ENCODE measurements at regions of chr18 and their contacts with region 1.

Region 1: DNA sequence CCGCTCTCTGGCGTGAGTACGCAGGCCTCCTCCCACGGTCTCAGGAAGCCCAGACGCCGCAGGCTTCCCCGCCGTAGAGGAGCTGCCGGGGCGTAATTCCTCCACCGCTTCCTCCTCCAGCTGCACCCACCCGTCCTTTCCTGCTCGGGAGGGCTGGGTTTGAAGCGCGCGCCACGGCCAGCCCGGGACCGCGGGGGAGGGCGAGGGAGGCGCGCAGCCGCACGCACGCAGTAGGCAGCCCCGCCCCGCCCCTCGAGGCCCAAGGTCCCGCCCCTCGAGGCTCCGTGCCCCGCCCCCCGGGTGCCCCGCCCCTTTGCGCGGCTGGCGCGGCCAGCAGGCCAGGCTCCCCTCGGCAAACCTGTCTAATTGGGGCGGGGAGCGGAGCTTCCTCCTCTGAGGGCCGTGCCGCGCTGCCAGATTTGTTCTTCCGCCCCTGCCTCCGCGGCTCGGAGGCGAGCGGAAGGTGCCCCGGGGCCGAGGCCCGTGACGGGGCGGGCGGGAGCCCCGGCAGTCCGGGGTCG is at the start of gene MALT1:
- DNase-seq: peak; percentile 98
- H3K4me3 Mint-ChIP-seq: peak within 1 kb of the TSS; percentile 98
- H3K27ac Mint-ChIP-seq: peak within 1 kb of the TSS; percentile 92
- H3K4me1 Mint-ChIP-seq: peaks cover 61% of the 10 kb centered on the region
- H3K27me3 Mint-ChIP-seq: peaks cover 2% of the 10 kb centered on the region
- total RNA-seq, gene MALT1: 22.7 and 24.9 TPM in 2 replicates

Region 2: GRCh38 chr18:58615140-58616132 is 55.7 kb before region 1 on chr18:
- intact Hi-C with region 1: loop called (anchors 1 kb)
- DNase-seq: peak; percentile 89
- H3K4me3 Mint-ChIP-seq: peak overlapping the region; percentile 68
- H3K27ac Mint-ChIP-seq: peak overlapping the region; percentile 94
- H3K4me1 Mint-ChIP-seq: peaks cover 24% of the 10 kb centered on the region
- H3K27me3 Mint-ChIP-seq: peaks cover 21% of the 10 kb centered on the region

Region 3: DNA sequence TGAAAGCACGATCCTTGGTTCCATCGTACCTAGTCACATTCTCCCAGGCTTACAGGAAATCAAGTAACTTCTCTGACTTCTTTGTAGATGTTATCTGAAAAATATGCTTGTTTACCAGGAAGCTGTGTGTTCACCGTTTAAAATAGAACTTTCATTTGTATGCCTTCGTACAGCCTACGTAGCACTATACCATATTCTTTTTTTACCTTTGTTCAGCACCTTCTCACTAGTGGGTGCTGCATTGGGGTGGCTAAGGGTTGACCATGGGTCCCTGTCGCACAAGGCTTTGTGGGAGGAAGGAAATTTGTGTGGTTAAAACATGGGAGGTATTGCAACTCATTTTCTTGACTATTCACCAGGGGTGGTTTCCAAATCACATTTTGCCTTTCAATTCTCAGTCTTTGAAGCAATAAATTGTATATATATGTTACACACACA is 16.7 kb after region 1 on chr18:
- intact Hi-C with region 1: loop called (anchors 1 kb)
- DNase-seq: peak; percentile 91
- H3K4me3 Mint-ChIP-seq: peak overlapping the region; percentile 51
- H3K27ac Mint-ChIP-seq: peak overlapping the region; percentile 92
- H3K4me1 Mint-ChIP-seq: peaks cover 57% of the 10 kb centered on the region
- H3K27me3 Mint-ChIP-seq: no peaks in the 10 kb centered on the region

Region 4: DNA sequence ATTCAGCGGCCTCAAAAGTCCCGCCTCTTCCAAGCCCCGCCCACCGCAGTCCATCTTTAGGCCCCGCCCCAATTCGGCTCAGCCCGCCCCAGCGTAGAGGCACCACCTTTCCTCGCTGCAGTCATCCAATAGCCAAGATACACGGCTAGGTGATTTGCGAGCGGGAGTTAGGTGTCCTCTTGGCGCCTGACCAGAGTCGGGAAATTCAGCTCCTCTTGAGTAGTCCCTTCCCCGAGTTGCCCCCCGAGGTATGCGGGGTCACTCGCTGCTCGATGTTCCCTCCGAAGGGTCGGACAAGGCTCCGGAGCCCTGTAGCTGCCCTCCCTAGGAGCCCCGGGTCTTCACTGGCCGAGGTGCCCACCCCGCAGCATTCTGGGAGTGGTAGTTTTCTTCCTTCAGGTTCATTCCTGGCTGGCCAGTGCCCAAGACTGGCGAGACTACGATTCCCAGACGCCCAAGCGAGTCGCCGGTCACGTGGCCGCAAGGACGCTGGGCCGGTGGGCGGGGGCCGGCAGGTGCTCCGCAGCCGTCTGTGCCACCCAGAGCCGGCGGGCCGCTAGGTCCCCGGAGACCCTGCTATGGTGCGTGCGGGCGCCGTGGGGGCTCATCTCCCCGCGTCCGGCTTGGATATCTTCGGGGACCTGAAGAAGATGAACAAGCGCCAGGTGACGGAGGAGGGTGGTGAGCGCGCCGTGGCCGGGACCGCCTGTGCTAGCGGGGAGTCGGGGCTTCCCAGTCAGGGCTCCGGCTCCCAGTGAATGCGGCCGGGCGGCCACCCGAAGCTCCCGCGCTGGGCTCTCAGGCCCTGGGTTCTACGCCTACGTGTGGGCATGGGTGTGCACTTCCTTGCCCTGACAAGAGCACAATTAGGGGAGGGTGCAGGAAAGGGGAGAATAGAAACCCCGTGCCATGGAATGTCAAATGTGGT is 468.5 kb after region 1 on chr18 and contains the start of gene SEC11C:
- intact Hi-C with region 1: loop called (anchors 1 kb)
- DNase-seq: peak; percentile 99
- H3K4me3 Mint-ChIP-seq: peak within 1 kb of the TSS; percentile 97
- H3K27ac Mint-ChIP-seq: peak within 1 kb of the TSS; percentile 98
- H3K4me1 Mint-ChIP-seq: peaks cover 37% of the 10 kb centered on the region
- H3K27me3 Mint-ChIP-seq: peaks cover 27% of the 10 kb centered on the region
- total RNA-seq, gene SEC11C: 125 and 126 TPM in 2 replicates

Measured in activated CD4-positive, alpha-beta T cell treated with anti-CD3 and anti-CD28 coated beads, Interleukin-2, amount 10 ng/mL, durations not matched to agents 24 days and 14 days (primary cell).